Activated T-helper 1 cell treated with anti-CD3 and anti-CD28 coated beads, Interleukin-12 subunit alpha, Interleukin-12 subunit beta, Interleukin-2, Interleukin-4 antibody, amounts not matched to agents 30 ng/mL and 10 ng/mL and 1 ng/mL, durations not matched to agents 14 hours and 24 hours and 36 hours (primary cell): ENCODE measurements at regions of chr16 and their contacts with region 1.

Region 1: GRCh38 chr16:84754353-84754856 is 54.6 kb downstream of the USP10 start:
- DNase-seq: peak; percentile 67
- H3K4me3 Mint-ChIP-seq: peak overlapping the region; percentile 60
- H3K27ac Mint-ChIP-seq: no peak overlapping the region
- H3K4me1 Mint-ChIP-seq: peaks cover 76% of the 10 kb centered on the region
- H3K27me3 Mint-ChIP-seq: no peaks in the 10 kb centered on the region

Region 2: DNA sequence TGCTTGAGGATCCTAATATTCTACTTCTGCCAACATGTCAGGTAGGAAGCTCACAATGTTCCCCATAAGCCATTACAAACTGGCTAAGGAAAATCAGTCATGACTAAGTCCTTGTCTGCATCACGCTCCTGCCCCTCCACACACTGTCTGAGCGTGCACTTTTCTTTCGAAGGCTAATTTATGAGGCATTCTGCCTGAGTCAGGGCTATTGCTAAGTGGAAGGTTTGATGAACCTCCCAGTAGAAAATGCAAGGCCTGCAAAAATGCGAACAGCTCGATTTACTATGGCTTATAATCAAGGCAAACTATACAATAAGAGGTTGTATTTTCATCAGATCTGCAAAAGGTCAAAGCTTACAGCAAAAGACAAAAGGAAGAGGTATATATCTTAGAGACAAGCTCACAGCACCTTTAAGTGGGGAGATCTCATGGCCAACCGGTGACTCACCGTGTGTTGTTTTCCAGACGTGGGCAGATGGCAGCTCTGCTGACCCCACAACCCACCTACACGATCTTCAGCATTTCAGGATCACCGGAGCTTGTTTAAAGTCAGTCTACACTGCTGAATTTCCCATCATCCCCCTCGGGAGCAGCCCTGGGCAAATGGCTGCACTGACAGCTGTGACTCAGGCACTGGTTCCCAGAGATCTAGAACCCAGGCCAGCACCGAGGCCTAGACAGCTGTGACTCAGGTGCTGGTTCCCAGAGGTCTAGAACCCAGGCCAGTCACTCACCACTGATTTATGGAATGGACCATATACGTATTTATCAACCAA is 276.0 kb before region 1 on chr16:
- intact Hi-C with region 1: no loop called
- DNase-seq: no peak
- H3K4me3 Mint-ChIP-seq: no peak overlapping the region
- H3K27ac Mint-ChIP-seq: peak overlapping the region; percentile 26
- H3K4me1 Mint-ChIP-seq: peaks cover 24% of the 10 kb centered on the region
- H3K27me3 Mint-ChIP-seq: no peaks in the 10 kb centered on the region

Region 3: DNA sequence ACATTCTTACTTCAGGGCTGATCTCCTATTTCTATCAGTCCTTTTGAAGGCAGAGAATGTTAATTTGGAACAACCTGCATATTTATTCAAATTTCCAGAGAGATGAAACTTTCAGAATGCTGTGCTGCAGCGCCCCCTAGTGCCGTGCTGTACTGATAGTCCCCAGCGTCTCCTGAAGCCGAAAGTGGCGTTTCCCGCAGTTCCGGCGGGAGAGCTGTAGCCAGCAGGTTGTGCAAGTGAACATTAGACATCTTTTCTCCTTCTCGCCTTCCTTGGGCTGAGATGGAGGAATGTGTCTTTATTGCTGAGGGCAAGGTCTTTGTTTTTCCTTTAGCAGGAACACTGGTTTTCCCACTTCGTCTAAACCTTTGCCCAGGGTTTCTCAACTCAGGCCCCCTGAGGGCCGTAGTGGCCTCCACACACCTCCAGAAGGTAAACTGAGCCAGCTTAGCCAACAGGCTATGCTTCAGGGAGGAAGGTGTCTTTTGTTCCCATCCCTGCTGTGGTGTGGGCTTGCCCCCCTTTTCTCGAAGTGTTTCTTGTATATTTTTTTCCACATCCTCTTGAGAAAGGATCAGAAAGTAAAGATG is 28.2 kb before region 1 on chr16:
- intact Hi-C with region 1: loop called (anchors 1 kb)
- DNase-seq: peak; percentile 62
- H3K4me3 Mint-ChIP-seq: peak overlapping the region; percentile 45
- H3K27ac Mint-ChIP-seq: no peak overlapping the region
- H3K4me1 Mint-ChIP-seq: peaks cover 79% of the 10 kb centered on the region
- H3K27me3 Mint-ChIP-seq: no peaks in the 10 kb centered on the region

Region 4: GRCh38 chr16:84810518-84811273 is 56.3 kb after region 1 on chr16:
- intact Hi-C with region 1: loop called (anchors 2 kb)
- DNase-seq: peak; percentile 51
- H3K4me3 Mint-ChIP-seq: peak overlapping the region; percentile 1
- H3K27ac Mint-ChIP-seq: peak overlapping the region; percentile 23
- H3K4me1 Mint-ChIP-seq: peaks cover 27% of the 10 kb centered on the region
- H3K27me3 Mint-ChIP-seq: no peaks in the 10 kb centered on the region

Region 5: GRCh38 chr16:84970447-84971127 is 216.2 kb after region 1 on chr16:
- intact Hi-C with region 1: loop called (anchors 1 kb)
- DNase-seq: peak; percentile 62
- H3K4me3 Mint-ChIP-seq: no peak overlapping the region
- H3K27ac Mint-ChIP-seq: no peak overlapping the region
- H3K4me1 Mint-ChIP-seq: peaks cover 6% of the 10 kb centered on the region
- H3K27me3 Mint-ChIP-seq: peaks cover 2% of the 10 kb centered on the region

Region 6: GRCh38 chr16:85086347-85087291 is 332.2 kb after region 1 on chr16:
- intact Hi-C with region 1: loop called (anchors 1 kb)
- DNase-seq: peak; percentile 64
- H3K4me3 Mint-ChIP-seq: no peak overlapping the region
- H3K27ac Mint-ChIP-seq: no peak overlapping the region
- H3K4me1 Mint-ChIP-seq: peaks cover 7% of the 10 kb centered on the region
- H3K27me3 Mint-ChIP-seq: no peaks in the 10 kb centered on the region

Region 7: DNA sequence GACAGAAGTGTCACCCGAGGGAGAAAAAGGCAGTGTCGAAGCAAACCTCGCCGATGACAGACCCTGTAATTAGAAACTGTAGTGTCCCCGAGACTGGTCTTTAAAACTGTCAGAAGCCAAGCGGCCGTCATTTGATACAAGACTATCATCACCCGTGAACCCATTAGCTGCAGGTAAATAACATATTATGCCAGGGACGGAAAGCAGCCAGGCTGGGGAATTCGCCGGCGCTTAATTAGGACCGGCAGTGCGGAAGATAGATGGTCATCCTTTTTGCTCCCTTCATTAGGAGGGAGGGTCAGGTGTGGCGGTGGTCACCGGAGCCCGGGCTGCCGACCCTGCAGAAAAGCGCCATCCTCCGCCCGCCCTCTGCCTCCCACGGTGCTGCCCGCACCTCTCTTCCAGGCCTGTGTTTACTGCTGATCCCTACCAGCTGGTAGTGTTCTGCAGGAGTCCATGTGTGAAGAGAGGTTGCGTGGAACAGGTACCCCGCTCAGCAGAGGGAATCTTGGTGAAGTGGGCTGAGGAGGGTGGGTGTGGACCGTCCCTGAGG is 749.4 kb after region 1 on chr16:
- intact Hi-C with region 1: no loop called
- DNase-seq: no peak
- H3K4me3 Mint-ChIP-seq: no peak overlapping the region
- H3K27ac Mint-ChIP-seq: no peak overlapping the region
- H3K4me1 Mint-ChIP-seq: no peaks in the 10 kb centered on the region
- H3K27me3 Mint-ChIP-seq: no peaks in the 10 kb centered on the region

Region 8: GRCh38 chr16:85955566-85955965 is 1201.2 kb after region 1 on chr16:
- intact Hi-C with region 1: no loop called
- DNase-seq: no peak
- H3K4me3 Mint-ChIP-seq: no peak overlapping the region
- H3K27ac Mint-ChIP-seq: no peak overlapping the region
- H3K4me1 Mint-ChIP-seq: peaks cover 19% of the 10 kb centered on the region
- H3K27me3 Mint-ChIP-seq: peaks cover 7% of the 10 kb centered on the region